Caco-2 (cell line): ENCODE measurements at regions of chr15 and their contacts with region 1.

Region 1: DNA sequence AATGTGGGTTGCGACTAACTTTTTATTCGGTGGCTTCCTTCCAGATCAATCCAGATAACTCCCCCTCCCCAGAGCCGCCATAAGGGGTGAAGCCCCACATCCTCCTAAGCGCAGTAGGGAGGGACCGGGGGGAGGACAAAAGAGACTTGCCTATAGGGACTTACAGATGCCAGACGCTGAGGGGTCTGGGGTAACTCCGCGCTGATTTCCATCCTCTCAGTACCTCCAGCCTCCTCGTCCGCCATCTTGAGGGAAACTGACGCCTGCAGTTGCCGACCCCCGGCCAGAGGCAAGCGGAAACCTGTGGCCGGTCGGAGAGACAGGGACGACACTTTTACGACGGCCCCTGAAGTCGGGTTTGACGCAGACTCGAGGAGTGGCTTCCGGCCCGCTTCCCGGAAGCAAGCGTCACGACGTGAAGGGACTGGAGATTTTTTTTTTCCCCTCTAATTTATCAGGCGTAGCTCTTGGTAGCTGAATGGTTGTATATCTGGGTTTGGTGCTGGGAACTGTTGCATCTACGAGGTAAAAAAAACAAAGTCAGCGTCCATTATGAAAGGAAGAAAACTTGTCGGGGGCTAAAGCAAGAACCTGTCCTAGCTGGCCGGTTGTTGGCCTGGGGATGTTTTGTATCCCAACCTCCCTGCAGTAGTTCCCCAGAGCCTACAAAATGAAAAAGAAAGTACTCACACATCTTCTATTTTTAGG is at the start of gene UBR1:
- DNase-seq: peak; percentile 88 to 91
- H3K4me3 ChIP-seq: peak within 1 kb of the TSS; percentile 67
- H3K4me3 Mint-ChIP-seq: peak within 1 kb of the TSS; percentile 88
- H3K27ac Mint-ChIP-seq: peak within 1 kb of the TSS; percentile 95
- H3K4me1 ChIP-seq: no peaks in the 10 kb centered on the region
- H3K4me1 Mint-ChIP-seq: peaks cover 6% of the 10 kb centered on the region
- H3K27me3 ChIP-seq: no peaks in the 10 kb centered on the region
- H3K27me3 Mint-ChIP-seq: no peaks in the 10 kb centered on the region
- CTCF ChIP-seq: no peak
- total RNA-seq, gene UBR1: 21.9 and 22.3 TPM in 2 replicates

Region 2: GRCh38 chr15:43121863-43122262 is 15.9 kb after region 1 on chr15:
- CTCF ChIA-PET with region 1: no interaction called
- POLR2A ChIA-PET with region 1: no interaction called
- intact Hi-C with region 1: loop called (anchors 1 kb)
- DNase-seq: no peak
- H3K4me3 ChIP-seq: no peak overlapping the region
- H3K4me3 Mint-ChIP-seq: peak overlapping the region; percentile 73
- H3K27ac Mint-ChIP-seq: no peak overlapping the region
- H3K4me1 ChIP-seq: peaks cover 12% of the 10 kb centered on the region; the same call in 1 of the 2 replicates
- H3K4me1 Mint-ChIP-seq: peaks cover 17% of the 10 kb centered on the region
- H3K27me3 ChIP-seq: no peaks in the 10 kb centered on the region
- H3K27me3 Mint-ChIP-seq: peaks cover 3% of the 10 kb centered on the region
- CTCF ChIP-seq: no peak

Region 3: GRCh38 chr15:43127752-43128151 is 21.8 kb after region 1 on chr15:
- CTCF ChIA-PET with region 1: no interaction called
- POLR2A ChIA-PET with region 1: no interaction called
- intact Hi-C with region 1: loop called (anchors 1 kb)
- DNase-seq: peak; percentile 40 to 58
- H3K4me3 ChIP-seq: no peak overlapping the region
- H3K4me3 Mint-ChIP-seq: peak overlapping the region; percentile 29
- H3K27ac Mint-ChIP-seq: peak overlapping the region; percentile 12
- H3K4me1 ChIP-seq: peaks cover 27% of the 10 kb centered on the region
- H3K4me1 Mint-ChIP-seq: peaks cover 29% of the 10 kb centered on the region
- H3K27me3 ChIP-seq: no peaks in the 10 kb centered on the region; the same call in 1 of the 2 replicates
- H3K27me3 Mint-ChIP-seq: no peaks in the 10 kb centered on the region
- CTCF ChIP-seq: no peak

Region 4: DNA sequence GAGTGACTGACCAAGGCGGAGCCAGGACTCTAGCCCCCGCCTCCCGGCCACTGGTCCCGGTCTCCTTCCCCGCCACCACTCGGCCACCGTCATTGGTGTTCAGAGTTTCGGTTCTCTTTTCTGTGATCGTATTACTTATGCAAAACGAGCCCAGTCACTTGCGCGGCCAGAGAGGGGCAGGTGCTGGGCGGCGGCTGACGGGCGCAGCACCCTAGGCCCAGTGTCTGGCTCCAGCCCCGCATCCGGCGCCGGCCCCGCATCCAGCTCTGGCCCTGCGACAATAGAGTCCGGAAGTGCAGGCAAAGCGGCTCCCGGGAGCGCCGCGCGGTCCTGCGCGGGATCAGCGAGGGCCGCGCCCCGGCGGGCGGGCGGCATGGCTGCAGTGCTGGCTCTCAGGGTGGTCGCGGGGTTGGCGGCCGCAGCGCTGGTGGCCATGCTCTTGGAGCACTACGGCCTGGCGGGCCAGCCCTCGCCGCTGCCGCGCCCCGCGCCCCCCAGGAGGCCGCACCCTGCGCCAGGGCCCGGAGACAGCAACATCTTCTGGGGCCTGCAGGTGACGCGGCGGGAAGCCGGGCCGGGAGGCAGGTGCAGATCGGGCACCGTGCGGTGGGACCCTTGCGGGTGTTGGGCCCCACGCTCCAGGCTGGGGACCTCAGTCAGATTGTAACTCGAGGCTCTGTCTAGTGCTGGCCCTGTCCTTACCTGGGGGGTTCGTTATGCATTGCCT is 27.7 kb after region 1 on chr15 and contains the start of gene TMEM62:
- CTCF ChIA-PET with region 1: no interaction called
- POLR2A ChIA-PET with region 1: no interaction called
- intact Hi-C with region 1: loop called (anchors 1 kb)
- DNase-seq: peak; percentile 87 to 89
- H3K4me3 ChIP-seq: peak within 1 kb of the TSS; percentile 73
- H3K4me3 Mint-ChIP-seq: peak within 1 kb of the TSS; percentile 94
- H3K27ac Mint-ChIP-seq: peak within 1 kb of the TSS; percentile 95
- H3K4me1 ChIP-seq: no peaks in the 10 kb centered on the region
- H3K4me1 Mint-ChIP-seq: peaks cover 16% of the 10 kb centered on the region
- H3K27me3 ChIP-seq: no peaks in the 10 kb centered on the region; the same call in 1 of the 2 replicates
- H3K27me3 Mint-ChIP-seq: no peaks in the 10 kb centered on the region
- CTCF ChIP-seq: peak in 1 of 2 experiments; percentile 2
- total RNA-seq, gene TMEM62: 22.0 and 23.7 TPM in 2 replicates

Region 5: DNA sequence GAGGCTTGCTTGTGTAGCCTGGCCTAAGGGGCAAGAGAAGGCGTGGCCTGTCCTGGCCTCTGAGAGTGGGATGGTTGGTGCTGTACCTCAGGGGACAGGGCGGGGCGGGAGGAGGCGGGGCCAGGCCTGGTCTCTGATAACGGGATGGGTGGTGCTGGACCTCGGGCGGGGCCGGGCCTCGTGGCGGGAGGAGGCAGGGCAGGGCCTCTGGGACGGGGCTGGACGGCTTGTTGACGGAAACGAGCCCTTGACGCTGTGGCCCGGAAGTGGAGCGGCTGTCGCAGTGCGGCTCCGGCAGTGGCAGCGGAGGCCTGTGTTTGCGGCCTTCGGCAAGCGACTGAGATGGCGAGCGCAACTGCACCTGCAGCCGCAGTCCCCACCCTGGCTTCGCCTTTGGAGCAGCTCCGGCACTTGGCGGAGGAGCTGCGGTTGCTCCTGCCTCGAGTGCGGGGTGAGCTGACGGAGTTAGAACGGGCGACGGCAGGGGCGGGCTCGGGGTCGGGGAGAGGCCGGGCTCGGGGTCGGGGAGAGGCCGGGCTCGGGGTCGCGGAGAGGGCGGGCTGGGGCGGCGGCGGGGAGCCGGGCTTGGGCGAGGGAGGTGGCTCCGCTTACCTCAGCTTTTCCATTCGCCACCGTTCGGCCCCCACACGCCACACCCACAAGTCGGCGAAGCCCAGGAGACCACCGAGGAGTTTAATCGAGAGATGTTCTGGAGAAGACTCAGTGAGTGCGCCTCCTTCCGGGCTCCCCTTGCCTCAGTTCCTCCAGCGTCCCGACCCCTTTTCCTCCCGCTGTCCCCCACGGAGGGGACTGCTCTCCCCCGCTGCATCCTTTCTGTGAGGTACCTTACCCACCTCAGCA is 79.5 kb after region 1 on chr15 and contains the start of gene CCNDBP1:
- CTCF ChIA-PET with region 1: no interaction called
- POLR2A ChIA-PET with region 1: no interaction called
- intact Hi-C with region 1: loop called (anchors 1 kb)
- DNase-seq: peak; percentile 96 to 97
- H3K4me3 ChIP-seq: peak within 1 kb of the TSS; percentile 82
- H3K4me3 Mint-ChIP-seq: peak within 1 kb of the TSS; percentile 93
- H3K27ac Mint-ChIP-seq: peak within 1 kb of the TSS; percentile 79
- H3K4me1 ChIP-seq: peaks cover 12% of the 10 kb centered on the region
- H3K4me1 Mint-ChIP-seq: peaks cover 4% of the 10 kb centered on the region
- H3K27me3 ChIP-seq: no peaks in the 10 kb centered on the region
- H3K27me3 Mint-ChIP-seq: no peaks in the 10 kb centered on the region
- CTCF ChIP-seq: peak; percentile 42 to 55
- total RNA-seq, gene CCNDBP1: 21.7 and 23.1 TPM in 2 replicates